Head of caudate nucleus (tissue), 42 donors: ENCODE measurements at regions of chr5 and their contacts with region 1.

Region 1: DNA sequence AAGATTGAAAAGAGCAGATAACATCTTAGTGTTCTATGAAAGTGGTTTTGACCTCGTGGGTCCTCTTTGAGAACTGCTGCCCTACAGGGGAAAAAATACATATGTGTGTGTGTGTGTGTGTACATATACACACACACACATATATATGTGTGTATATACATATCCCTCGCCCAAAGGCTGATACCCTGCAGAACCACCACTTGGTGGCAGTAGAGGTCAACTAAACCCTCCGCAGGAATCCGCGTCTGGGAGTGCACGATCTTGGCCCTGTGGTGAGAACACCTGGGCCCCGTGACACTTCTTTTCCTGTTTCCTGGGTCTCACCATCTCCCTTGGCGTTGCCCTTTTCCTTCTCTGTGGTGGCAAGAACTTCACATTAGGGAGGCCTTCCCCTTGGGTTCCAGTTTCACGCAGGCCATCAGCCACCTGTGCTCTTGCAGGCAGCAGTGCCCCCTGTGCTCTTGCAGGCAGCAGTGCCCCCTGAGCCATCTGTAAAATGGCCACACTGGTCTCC is 8.2 kb downstream of the IL9 start:
- DNase-seq: peak; percentile 43 to 86 (median 70)

Region 2: DNA sequence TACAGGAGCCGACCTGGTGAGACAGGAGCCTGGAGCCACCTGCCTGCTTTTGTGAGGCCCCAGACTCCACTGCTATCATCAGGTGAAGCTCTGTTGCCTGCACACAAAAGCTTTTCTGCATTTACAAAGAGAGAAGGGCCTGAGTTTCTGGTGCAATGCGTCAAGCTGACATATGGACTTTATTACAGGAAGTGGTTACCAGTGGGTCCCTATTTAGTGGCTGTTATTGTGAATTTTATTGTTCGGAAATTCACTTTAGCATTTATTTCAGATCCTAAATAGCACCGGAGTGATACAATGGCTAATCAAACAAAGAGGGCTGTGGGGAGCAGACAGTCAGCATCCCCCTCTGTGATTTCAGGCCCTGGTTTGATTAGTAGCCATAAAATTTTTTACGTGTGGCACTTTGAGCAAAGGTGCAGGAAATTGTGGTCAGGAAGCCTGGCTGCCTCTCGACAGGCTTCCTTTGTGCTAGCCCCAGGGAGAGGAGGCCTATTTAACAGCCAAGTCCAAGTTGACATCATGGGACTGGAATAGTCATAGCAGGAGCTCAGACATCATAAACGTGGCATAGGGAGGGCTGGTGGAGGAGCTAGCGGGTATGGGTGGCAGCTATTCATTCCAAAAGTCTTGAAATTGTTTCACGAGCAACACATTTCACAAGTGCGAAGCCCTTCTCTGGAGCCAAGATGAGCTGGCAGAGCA is 149.7 kb after region 1 on chr5:
- intact Hi-C with region 1: no loop called
- DNase-seq: peak in 1 of 42 donors; percentile 21

Region 3: GRCh38 chr5:136062366-136063274 is 175.2 kb after region 1 on chr5:
- intact Hi-C with region 1: no loop called
- DNase-seq: peak in 2 of 42 donors; percentile 7 to 19

Region 4: DNA sequence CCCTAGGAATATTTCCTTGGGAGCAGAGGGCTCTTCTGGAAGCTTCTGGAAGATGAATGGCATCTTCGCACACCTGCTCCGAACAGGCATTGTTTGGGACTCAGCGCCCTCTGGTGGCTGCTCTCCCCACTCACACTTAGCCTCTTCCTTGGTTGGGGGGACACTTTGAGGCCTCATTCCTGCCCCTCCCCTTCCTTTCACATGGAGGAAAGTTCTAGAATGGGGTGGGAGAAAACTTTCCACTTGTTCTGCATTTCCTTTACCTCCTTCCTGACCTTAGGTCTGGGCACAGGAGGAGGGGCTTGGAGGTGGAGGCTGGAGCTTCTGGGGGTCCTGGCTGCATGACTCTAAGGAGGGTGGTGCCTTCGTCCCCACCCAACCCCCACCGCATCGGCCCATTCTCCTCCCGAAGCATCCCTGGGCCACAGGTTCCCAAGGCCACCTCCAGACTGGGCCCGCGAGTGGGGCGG is 324.9 kb after region 1 on chr5:
- intact Hi-C with region 1: loop called (anchors 5 kb)
- DNase-seq: peak in 41 of 42 donors; percentile 21 to 87 (median 63)